ENCODE measurements at regions of chr7 and their contacts with region 1.

Region 1: DNA sequence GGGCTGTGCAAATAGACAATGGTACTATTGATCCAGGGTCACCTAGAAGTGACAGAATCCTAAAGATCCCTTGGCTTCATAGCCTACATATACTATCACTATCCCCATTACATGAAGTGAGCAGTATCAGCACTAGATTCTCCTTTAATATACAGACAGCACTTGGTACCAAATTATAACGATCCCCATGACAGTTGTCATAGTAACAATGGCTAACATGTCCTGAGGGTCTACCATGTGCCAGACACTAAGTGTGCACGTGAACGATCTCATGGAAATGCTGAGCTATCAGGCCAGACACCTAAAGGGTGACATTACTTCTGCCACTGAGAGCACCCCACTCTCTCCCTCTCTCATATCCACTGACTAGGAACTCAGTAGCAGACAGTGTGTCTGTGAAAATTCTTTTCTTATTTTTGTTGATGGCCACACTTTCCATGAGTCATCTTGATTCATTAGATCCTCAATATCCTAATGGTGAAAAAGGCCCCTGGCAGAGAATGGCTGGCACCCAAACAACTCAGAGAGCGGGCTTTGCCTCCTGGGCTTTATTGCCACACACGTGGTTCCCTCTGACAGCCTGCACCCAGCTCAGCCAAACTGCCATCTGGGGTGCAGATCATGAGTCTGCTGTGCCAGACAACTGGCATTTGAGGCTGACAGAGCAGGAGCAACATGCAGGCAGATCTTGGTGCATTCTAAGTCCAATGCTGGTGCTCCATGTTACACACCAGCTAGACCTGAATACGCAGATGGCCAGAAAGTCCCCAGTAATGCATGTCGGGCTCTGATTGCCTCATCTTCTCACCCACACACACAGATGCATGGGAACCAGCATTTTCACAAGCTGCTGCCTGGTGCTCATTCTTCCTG is 176.3 kb downstream of the DGKI start:
- DNase-seq: no peak
- H3K4me3 Mint-ChIP-seq: no peak overlapping the region
- H3K27ac Mint-ChIP-seq: no peak overlapping the region
- H3K4me1 Mint-ChIP-seq: no peaks in the 10 kb centered on the region
- H3K27me3 Mint-ChIP-seq: peaks cover 9% of the 10 kb centered on the region

Region 2: GRCh38 chr7:137656227-137656849 is 14.1 kb before region 1 on chr7:
- CTCF ChIA-PET with region 1: interaction called, 29 read pairs
- POLR2A ChIA-PET with region 1: no interaction called
- intact Hi-C with region 1: no loop called
- DNase-seq: peak; percentile 81
- H3K4me3 Mint-ChIP-seq: no peak overlapping the region
- H3K27ac Mint-ChIP-seq: no peak overlapping the region
- H3K4me1 Mint-ChIP-seq: no peaks in the 10 kb centered on the region
- H3K27me3 Mint-ChIP-seq: peaks cover 4% of the 10 kb centered on the region

Region 3: GRCh38 chr7:138948108-138948802 is 1277.8 kb after region 1 on chr7:
- CTCF ChIA-PET with region 1: no interaction called
- POLR2A ChIA-PET with region 1: no interaction called
- intact Hi-C with region 1: no loop called
- DNase-seq: no peak
- H3K4me3 Mint-ChIP-seq: no peak overlapping the region
- H3K27ac Mint-ChIP-seq: no peak overlapping the region
- H3K4me1 Mint-ChIP-seq: no peaks in the 10 kb centered on the region
- H3K27me3 Mint-ChIP-seq: peaks cover 3% of the 10 kb centered on the region

Measured in activated CD4-positive, alpha-beta memory T cell treated with anti-CD3 and anti-CD28 coated beads for 36 hours (primary cell).